ENCODE measurements at regions of chr1 and their contacts with region 1.

Region 1: DNA sequence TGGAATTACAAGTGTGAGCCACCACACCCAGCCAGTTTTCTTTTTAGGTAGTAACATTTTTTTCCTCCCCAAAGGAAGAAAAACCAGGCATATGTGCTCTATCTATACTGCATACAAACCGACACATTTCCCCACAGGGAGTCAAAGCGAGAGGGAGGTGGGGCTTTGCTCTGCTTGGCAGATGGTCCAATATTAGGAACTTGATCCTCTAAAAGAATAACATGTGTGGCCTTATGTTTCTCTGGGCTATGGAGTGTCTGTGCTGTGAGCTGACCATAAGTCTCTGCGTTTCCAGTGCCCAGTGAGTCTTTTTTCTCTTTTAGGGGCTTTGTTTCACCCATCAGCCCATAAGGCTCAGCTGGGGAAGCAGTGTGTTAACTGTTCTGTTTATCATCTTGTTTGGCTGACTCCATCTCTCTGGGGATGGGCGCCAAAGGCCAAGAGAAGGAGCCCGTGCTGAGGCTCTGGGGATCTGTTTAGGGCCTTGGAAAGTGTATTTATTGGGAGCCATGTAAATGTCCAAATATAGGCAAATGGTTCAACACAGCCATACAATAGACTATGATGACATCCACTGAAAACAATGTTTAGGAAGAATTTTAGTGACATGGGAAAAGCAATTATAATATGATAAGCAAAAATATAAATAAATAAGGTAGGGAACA is 20.2 kb downstream of the LMOD1 start:
- DNase-seq: no peak
- H3K4me3 Mint-ChIP-seq: no peak overlapping the region
- H3K27ac Mint-ChIP-seq: no peak overlapping the region
- H3K4me1 Mint-ChIP-seq: no peaks in the 10 kb centered on the region
- H3K27me3 Mint-ChIP-seq: no peaks in the 10 kb centered on the region
- CTCF ChIP-seq: no peak

Region 2: DNA sequence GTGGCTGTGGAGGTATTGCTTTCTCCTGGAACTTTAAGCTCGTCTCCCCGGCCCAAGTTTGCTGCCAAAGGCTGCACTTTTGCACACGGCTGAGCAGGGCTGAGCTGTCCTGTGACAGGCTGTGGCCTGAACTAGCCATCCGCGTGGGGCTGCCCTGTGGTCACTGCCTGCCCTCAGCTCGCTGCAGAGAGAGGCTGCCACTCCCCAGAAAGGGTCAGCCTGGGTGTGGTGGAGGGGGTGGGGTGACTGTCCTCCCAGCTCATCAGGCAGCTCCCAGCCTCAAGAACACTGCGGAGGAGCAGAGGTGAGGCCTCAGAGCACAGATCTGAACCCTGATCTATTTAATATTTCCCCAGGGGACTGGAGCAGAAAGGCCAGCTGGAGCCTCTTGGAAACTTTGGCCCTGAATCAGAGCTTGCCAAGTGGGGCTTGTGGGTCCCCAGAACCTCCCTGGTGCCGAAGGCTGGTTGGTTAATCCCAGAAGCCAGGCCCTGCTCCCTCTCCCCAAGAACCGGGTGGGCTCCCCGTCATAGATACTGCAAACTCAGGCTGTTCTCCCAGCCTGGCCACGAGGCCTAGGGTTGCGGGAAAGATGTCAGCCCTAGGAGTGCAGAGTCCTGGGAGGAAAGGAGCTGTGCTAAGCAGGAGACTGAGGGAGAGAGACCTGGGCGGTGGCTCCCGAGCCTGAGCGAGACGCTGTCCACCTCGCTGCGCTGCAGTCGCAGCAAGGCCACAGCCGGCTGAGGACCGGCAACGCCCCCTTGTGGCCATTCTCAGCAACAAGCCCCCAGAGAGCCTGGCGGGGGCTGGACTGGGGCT is 222.3 kb before region 1 on chr1:
- CTCF ChIA-PET with region 1: no interaction called
- POLR2A ChIA-PET with region 1: no interaction called
- intact Hi-C with region 1: no loop called
- DNase-seq: peak; percentile 90
- H3K4me3 Mint-ChIP-seq: no peak overlapping the region
- H3K27ac Mint-ChIP-seq: peak overlapping the region; percentile 16
- H3K4me1 Mint-ChIP-seq: peaks cover 25% of the 10 kb centered on the region
- H3K27me3 Mint-ChIP-seq: no peaks in the 10 kb centered on the region
- CTCF ChIP-seq: peak; percentile 100

Region 3: DNA sequence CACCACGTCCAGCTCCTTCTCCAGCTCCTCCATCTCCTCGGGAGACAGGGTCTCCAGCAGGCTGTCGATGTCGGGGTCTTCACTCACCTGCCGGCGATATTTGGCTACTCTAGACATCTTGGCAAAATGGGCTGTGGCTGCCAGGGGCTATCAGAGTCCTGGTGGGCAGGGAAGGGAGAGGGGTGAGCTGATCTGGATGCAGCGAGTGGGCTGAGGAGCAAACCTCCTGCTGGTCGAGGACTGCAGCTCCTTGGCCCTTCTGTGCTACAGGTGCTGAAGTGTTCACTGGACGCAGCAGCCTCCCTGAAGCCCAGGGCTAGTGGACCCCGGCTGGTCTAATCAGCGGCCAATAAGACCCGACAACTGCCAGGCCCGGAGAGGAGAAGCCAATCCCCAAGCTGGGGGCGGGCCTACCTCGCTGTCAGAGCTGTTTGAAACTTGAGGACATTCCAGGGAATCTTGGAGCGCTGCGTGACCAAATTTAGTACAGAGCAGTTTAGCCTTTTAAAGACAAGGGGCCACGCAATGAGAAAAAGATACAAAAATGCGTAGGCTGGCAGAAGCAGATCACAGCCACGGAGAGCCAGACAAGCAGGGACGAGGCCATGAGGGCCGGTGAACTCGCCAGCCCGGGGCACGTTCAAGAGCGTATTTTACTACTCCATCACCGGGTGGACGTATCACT is 20.3 kb after region 1 on chr1 and contains the start of gene LMOD1:
- CTCF ChIA-PET with region 1: interaction called, 4 read pairs
- POLR2A ChIA-PET with region 1: no interaction called
- intact Hi-C with region 1: loop called (anchors 1 kb)
- DNase-seq: peak; percentile 73
- H3K4me3 Mint-ChIP-seq: peak within 1 kb of the TSS; percentile 5
- H3K27ac Mint-ChIP-seq: no peak within 1 kb of the TSS
- H3K4me1 Mint-ChIP-seq: peaks cover 10% of the 10 kb centered on the region
- H3K27me3 Mint-ChIP-seq: peaks cover 35% of the 10 kb centered on the region
- CTCF ChIP-seq: no peak
- total RNA-seq, gene LMOD1: not detected in 2 replicates

Region 4: DNA sequence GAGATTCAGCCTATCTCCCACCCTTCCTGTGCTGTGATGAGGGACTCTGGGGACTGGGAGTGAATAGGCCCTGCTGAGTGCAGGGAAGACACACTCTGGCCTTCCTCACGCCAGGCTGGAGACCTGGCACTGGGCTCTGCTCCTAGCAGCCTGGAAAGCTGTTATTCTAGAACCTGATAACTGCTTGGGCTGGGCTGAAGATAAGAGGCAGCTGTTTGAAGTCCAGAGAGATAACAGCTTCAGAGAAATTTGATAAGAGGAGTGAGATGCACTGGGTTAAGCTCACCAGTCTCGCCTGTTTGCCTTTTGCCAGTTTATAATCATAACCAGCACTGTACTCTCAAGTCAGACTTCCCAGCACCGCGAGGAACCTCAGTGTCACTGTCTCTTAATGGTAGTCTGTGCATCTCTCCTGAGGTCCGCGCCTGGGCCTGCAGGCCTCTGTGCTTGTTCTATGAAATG is 150.0 kb after region 1 on chr1:
- CTCF ChIA-PET with region 1: no interaction called
- POLR2A ChIA-PET with region 1: no interaction called
- intact Hi-C with region 1: no loop called
- DNase-seq: no peak
- H3K4me3 Mint-ChIP-seq: no peak overlapping the region
- H3K27ac Mint-ChIP-seq: no peak overlapping the region
- H3K4me1 Mint-ChIP-seq: peaks cover 12% of the 10 kb centered on the region
- H3K27me3 Mint-ChIP-seq: no peaks in the 10 kb centered on the region
- CTCF ChIP-seq: no peak

Region 5: GRCh38 chr1:202154766-202155477 is 228.8 kb after region 1 on chr1:
- CTCF ChIA-PET with region 1: no interaction called
- POLR2A ChIA-PET with region 1: no interaction called
- intact Hi-C with region 1: no loop called
- DNase-seq: peak; percentile 92
- H3K4me3 Mint-ChIP-seq: no peak overlapping the region
- H3K27ac Mint-ChIP-seq: no peak overlapping the region
- H3K4me1 Mint-ChIP-seq: peaks cover 12% of the 10 kb centered on the region
- H3K27me3 Mint-ChIP-seq: no peaks in the 10 kb centered on the region
- CTCF ChIP-seq: peak; percentile 58